Breast epithelium (tissue), 4 donors: ENCODE measurements at regions of chr10 and their contacts with region 1.

Region 1: GRCh38 chr10:59212301-59212798 is 35.9 kb downstream of the PHYHIPL start:
- DNase-seq: no peak
- H3K4me3 ChIP-seq: no peak overlapping the region
- H3K27ac ChIP-seq: no peak overlapping the region
- H3K4me1 ChIP-seq: no peaks in the 10 kb centered on the region
- H3K27me3 ChIP-seq: no peaks in the 10 kb centered on the region
- CTCF ChIP-seq: no peak
- POLR2A ChIP-seq: no peak

Region 2: GRCh38 chr10:59036311-59037017 is 175.9 kb before region 1 on chr10:
- intact Hi-C with region 1: loop called (anchors 5 kb)
- DNase-seq: no peak
- H3K4me3 ChIP-seq: no peak overlapping the region
- H3K27ac ChIP-seq: no peak overlapping the region
- H3K4me1 ChIP-seq: no peaks in the 10 kb centered on the region
- H3K27me3 ChIP-seq: no peaks in the 10 kb centered on the region
- CTCF ChIP-seq: no peak
- POLR2A ChIP-seq: no peak

Region 3: DNA sequence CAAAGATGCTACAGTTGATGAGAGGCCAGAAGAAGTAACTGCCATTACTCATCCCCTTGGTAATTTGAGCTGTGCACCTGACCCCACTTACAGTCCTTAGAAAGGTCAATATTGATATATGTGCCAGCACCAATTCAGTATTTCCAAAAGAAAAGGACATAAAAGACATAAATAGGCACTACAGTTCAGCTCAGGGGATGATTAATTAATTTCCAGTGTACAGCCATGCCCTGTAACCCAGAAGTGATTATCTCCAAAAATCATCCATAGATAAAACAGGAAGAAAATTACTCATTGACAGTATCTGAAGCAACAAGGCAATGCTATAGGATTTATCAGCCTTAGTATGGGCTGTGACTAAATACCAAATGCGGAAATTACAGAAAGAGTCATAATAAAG is 46.5 kb after region 1 on chr10:
- intact Hi-C with region 1: no loop called
- DNase-seq: no peak
- H3K4me3 ChIP-seq: no peak overlapping the region
- H3K27ac ChIP-seq: no peak overlapping the region
- H3K4me1 ChIP-seq: no peaks in the 10 kb centered on the region
- H3K27me3 ChIP-seq: no peaks in the 10 kb centered on the region
- CTCF ChIP-seq: no peak
- POLR2A ChIP-seq: no peak